Breast epithelium (tissue), 4 donors: ENCODE measurements at regions of chr12 and their contacts with region 1.

Region 1: DNA sequence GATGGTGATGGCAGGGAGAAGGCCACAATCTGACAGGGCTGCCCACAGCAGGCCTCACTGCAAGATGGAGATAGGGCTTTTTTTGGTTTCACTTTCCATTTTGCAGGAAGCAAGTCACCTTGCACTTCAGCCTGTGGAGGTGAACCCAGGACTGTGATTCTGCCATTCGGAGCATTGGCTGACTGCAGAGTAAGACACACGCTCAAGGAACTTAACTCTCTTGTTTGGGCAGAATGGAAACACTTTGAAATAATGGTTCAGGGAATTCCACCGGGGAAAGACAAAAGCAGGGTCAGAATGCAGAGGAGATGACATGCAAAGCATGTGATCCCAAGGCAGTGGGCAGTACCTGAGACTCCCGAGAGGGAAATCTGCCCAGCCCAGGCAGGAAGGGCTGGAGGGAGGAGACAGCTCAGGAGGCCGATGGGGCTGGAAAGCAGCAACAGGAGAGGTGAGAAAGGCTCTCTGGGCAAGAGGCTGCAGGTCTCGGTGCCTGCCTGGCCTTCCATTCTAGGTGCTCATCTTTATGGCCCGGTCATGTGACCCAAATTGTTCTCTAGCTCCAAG is 58.7 kb upstream of the PRMT8 start:
- DNase-seq: no peak
- H3K4me3 ChIP-seq: peak overlapping the region in 1 of 3 donors; percentile 16
- H3K27ac ChIP-seq: no peak overlapping the region
- H3K4me1 ChIP-seq: no peaks in the 10 kb centered on the region
- H3K27me3 ChIP-seq: no peaks in the 10 kb centered on the region
- CTCF ChIP-seq: no peak
- POLR2A ChIP-seq: no peak

Region 2: DNA sequence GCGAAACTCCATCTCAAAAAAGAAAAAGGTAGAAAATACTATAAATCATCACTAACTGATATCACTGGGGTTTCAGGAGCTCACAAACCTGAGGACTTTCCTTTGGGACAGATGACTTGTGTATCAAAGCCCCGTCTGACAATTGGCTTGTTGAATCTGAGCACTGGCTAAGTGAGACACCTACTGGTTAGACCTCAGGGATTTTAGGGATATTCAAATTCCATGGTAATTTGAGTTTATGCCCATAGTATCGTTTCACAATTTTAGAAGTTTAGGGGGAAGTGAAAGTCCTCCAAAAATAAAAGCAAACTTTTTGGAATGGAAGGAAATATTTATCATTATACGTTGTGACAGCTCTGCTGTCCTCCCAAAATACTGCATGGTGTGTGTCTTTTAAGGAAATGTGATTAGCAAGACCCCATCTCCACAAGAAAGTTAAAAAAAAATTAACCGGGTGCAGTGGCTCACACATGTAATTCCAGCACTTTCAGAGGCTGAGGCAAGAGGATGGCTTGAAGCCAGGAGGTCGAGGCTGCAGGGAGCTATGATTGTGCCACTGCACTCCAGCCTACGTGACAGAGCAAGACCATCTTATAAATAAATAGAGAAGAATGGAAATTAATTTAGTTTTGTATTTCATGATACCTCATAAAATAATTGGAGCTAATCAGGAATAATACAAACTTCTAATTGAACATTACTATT is 1887.1 kb before region 1 on chr12:
- intact Hi-C with region 1: loop called (anchors 10 kb)
- DNase-seq: peak in 1 of 2 donors; percentile 12
- H3K4me3 ChIP-seq: no peak overlapping the region
- H3K27ac ChIP-seq: no peak overlapping the region
- H3K4me1 ChIP-seq: no peaks in the 10 kb centered on the region
- H3K27me3 ChIP-seq: no peaks in the 10 kb centered on the region
- CTCF ChIP-seq: no peak
- POLR2A ChIP-seq: no peak